ENCODE measurements at regions of chr12 and their contacts with region 1.

Region 1: GRCh38 chr12:51970904-51971646 is 19.6 kb downstream of the ACVR1B start:
- DNase-seq: peak; percentile 75

Region 2: GRCh38 chr12:51922741-51923391 is 48.2 kb before region 1 on chr12:
- CTCF ChIA-PET with region 1: no interaction called
- POLR2A ChIA-PET with region 1: no interaction called
- DNase-seq: no peak

Region 3: GRCh38 chr12:51959211-51959610 is 11.9 kb before region 1 on chr12:
- CTCF ChIA-PET with region 1: interaction called, 28 read pairs
- POLR2A ChIA-PET with region 1: no interaction called
- DNase-seq: no peak

Region 4: GRCh38 chr12:51984657-51985056 is 13.6 kb after region 1 on chr12:
- CTCF ChIA-PET with region 1: interaction called, 11 read pairs
- POLR2A ChIA-PET with region 1: no interaction called
- DNase-seq: no peak

Region 5: DNA sequence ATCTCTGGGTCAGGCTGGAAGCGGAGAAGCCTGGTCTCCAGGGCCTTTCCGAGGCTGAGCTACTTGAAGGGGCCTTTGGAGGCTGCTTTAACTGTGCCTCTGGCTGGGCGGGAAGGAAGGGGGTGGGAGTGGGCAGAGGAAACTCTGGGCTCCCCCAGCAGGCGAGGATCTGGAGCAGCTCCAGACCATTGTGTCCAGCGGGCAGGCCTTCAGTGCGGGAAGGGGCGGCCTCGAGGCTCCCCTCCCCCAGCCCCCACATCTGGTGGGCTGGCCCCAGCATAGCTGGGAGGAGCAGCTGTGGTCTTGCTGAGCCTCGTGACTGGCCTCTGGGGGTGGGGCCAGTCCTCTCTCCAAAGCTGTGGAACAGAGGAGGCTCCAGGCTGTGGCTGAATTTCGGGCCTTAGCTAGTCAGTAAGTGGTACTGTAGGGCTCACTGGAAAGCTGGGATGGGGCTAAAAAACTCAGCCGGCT is 39.1 kb after region 1 on chr12:
- CTCF ChIA-PET with region 1: interaction called, 11 read pairs
- POLR2A ChIA-PET with region 1: no interaction called
- DNase-seq: peak; percentile 42

Measured in HEK293T (cell line).